Activated T-helper 1 cell treated with anti-CD3 and anti-CD28 coated beads, Interleukin-12 subunit alpha, Interleukin-12 subunit beta, Interleukin-2, Interleukin-4 antibody, amounts not matched to agents 30 ng/mL and 10 ng/mL and 1 ng/mL, durations not matched to agents 14 hours and 24 hours and 36 hours (primary cell): ENCODE measurements at regions of chr20 and their contacts with region 1.

Region 1: GRCh38 chr20:53216856-53217576 is 244.9 kb downstream of the TSHZ2 start:
- DNase-seq: peak; percentile 66
- H3K4me3 Mint-ChIP-seq: peak overlapping the region; percentile 51
- H3K27ac Mint-ChIP-seq: peak overlapping the region; percentile 59
- H3K4me1 Mint-ChIP-seq: peaks cover 53% of the 10 kb centered on the region
- H3K27me3 Mint-ChIP-seq: no peaks in the 10 kb centered on the region

Region 2: GRCh38 chr20:52312132-52312729 is 904.8 kb before region 1 on chr20:
- intact Hi-C with region 1: loop called (anchors 2 kb)
- DNase-seq: peak; percentile 20
- H3K4me3 Mint-ChIP-seq: no peak overlapping the region
- H3K27ac Mint-ChIP-seq: no peak overlapping the region
- H3K4me1 Mint-ChIP-seq: no peaks in the 10 kb centered on the region
- H3K27me3 Mint-ChIP-seq: no peaks in the 10 kb centered on the region

Region 3: DNA sequence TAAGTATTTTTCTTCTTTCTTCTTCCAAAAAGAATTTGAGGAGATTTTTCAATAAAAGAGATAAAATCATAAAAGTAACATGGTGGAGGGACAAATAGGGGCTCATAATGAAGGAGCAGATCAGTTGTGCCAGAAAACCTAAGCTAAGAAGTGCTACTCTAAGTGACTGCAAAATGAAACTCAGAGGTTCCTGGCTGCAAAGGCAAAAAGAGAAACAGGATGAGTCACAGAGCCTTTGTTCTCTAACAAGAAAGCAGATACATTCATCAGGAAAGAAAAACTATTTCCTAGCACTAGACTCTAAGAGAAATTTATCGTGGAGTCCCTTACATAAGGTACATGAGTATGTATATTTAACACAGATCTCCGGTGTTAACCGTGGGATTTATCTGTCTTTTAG is 195.1 kb before region 1 on chr20:
- intact Hi-C with region 1: loop called (anchors 5 kb)
- DNase-seq: peak; percentile 33
- H3K4me3 Mint-ChIP-seq: peak overlapping the region; percentile 24
- H3K27ac Mint-ChIP-seq: peak overlapping the region; percentile 90
- H3K4me1 Mint-ChIP-seq: peaks cover 87% of the 10 kb centered on the region
- H3K27me3 Mint-ChIP-seq: no peaks in the 10 kb centered on the region

Region 4: GRCh38 chr20:53077373-53078205 is 139.4 kb before region 1 on chr20:
- intact Hi-C with region 1: loop called (anchors 2 kb)
- DNase-seq: no peak
- H3K4me3 Mint-ChIP-seq: no peak overlapping the region
- H3K27ac Mint-ChIP-seq: no peak overlapping the region
- H3K4me1 Mint-ChIP-seq: peaks cover 19% of the 10 kb centered on the region
- H3K27me3 Mint-ChIP-seq: no peaks in the 10 kb centered on the region

Region 5: GRCh38 chr20:53157443-53158408 is 59.3 kb before region 1 on chr20:
- intact Hi-C with region 1: loop called (anchors 2 kb)
- DNase-seq: no peak
- H3K4me3 Mint-ChIP-seq: peak overlapping the region; percentile 12
- H3K27ac Mint-ChIP-seq: peak overlapping the region; percentile 50
- H3K4me1 Mint-ChIP-seq: peaks cover 65% of the 10 kb centered on the region
- H3K27me3 Mint-ChIP-seq: no peaks in the 10 kb centered on the region

Region 6: GRCh38 chr20:53262294-53262859 is 45.4 kb after region 1 on chr20:
- intact Hi-C with region 1: no loop called
- DNase-seq: no peak
- H3K4me3 Mint-ChIP-seq: no peak overlapping the region
- H3K27ac Mint-ChIP-seq: no peak overlapping the region
- H3K4me1 Mint-ChIP-seq: no peaks in the 10 kb centered on the region
- H3K27me3 Mint-ChIP-seq: no peaks in the 10 kb centered on the region